ENCODE measurements at regions of chr19 and their contacts with region 1.

Region 1: GRCh38 chr19:32971715-32972540 is at the starts of genes CEP89 and FAAP24:
- DNase-seq: peak; percentile 99
- H3K4me3 Mint-ChIP-seq: peak within 1 kb of the TSS; percentile 99
- H3K27ac Mint-ChIP-seq: peak within 1 kb of the TSS; percentile 84
- H3K4me1 Mint-ChIP-seq: peaks cover 17% of the 10 kb centered on the region
- H3K27me3 Mint-ChIP-seq: no peaks in the 10 kb centered on the region
- total RNA-seq, gene CEP89: 15.6 to 21.0 TPM
- total RNA-seq, gene FAAP24: 8.1 to 8.3 TPM

Region 2: GRCh38 chr19:32674959-32675719 is 296.8 kb before region 1 on chr19 and contains the start of gene ANKRD27:
- CTCF ChIA-PET with region 1: interaction called, 3 read pairs
- POLR2A ChIA-PET with region 1: no interaction called
- intact Hi-C with region 1: loop called (anchors 5 kb)
- DNase-seq: peak; percentile 98
- H3K4me3 Mint-ChIP-seq: peak within 1 kb of the TSS; percentile 92
- H3K27ac Mint-ChIP-seq: peak within 1 kb of the TSS; percentile 67
- H3K4me1 Mint-ChIP-seq: peaks cover 28% of the 10 kb centered on the region
- H3K27me3 Mint-ChIP-seq: peaks cover 11% of the 10 kb centered on the region
- total RNA-seq, gene ANKRD27: 39.7 to 45.4 TPM

Region 3: DNA sequence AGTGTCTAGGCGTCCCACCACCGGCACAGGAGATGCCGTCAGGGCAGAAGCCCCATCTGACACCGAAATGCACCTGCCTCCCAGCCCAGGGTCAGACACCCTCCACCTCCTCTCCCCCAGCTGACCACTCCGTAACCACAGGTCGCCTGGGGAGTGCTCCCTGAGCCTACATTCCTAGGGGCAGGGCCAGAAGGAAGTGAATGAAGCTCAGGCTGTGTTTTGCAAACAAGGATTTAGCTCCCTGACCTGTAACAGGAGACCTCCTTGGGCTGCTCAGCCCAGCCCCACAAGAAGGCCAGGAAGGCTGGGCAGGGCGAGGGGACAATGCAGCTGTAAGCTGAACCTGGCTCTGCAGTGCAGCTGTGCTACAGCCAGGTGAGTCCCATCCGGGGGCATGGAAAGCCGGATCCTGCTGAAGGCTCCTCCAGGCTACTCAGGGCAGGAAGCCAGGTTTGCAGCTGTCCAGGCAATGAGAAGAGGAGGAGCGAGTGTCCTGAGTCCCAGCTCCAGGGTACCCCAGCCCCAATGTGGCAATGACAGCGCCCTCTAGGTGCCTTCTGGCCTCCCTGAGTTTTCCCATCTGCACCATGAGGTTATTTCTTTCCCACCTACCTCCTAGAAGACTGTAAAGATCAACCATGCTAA is 50.7 kb after region 1 on chr19:
- CTCF ChIA-PET with region 1: no interaction called
- POLR2A ChIA-PET with region 1: no interaction called
- intact Hi-C with region 1: no loop called
- DNase-seq: no peak
- H3K4me3 Mint-ChIP-seq: no peak overlapping the region
- H3K27ac Mint-ChIP-seq: no peak overlapping the region
- H3K4me1 Mint-ChIP-seq: no peaks in the 10 kb centered on the region
- H3K27me3 Mint-ChIP-seq: peaks cover 3% of the 10 kb centered on the region

Region 4: DNA sequence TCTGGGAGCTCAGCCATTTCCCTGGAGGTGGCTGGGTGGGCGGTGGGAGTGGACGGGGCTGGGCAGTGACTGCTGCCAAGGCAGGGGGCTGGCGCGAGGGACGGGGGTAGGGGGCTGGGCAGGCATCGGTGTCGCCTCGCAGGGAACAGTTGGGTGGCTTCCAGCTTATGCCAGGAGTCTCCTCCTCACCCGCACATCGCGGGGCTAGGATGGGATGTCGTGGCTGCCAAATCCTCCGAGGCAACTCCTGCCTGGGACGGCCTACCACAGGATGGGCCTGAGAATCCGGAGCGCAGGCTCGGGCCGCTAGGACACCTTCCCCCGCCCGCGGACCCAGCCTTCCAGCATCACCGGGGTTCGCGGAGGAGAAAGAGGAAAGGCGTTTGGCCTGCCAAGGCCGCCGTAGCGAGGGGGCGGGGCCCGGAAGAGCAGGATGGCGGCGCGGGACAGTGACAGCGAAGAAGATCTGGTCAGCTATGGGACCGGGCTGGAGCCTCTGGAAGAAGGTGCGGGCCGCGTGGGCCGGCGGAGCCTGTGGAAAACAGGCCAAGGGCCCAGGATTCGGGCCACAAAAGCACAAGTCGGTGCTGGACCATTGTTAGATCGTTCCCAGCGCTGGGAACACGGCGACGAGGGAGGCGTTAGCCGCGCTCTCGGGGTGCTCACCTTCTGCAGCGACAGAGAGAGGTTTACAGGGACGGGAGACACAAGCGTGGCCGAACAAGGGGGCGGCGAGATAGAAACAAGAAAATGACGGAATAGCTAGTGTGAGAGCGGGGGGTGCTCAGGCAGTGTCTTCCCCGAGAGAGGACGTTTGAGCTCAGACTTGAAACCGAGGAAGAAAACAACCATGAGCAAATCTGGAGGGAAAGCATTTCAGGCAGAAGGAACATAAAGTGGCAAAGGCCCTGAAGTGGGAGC is 109.1 kb after region 1 on chr19 and contains the start of gene GPATCH1:
- CTCF ChIA-PET with region 1: interaction called, 8 read pairs
- POLR2A ChIA-PET with region 1: interaction called, 3 read pairs
- intact Hi-C with region 1: loop called (anchors 2 kb)
- DNase-seq: peak; percentile 93
- H3K4me3 Mint-ChIP-seq: peak within 1 kb of the TSS; percentile 94
- H3K27ac Mint-ChIP-seq: peak within 1 kb of the TSS; percentile 83
- H3K4me1 Mint-ChIP-seq: peaks cover 23% of the 10 kb centered on the region
- H3K27me3 Mint-ChIP-seq: no peaks in the 10 kb centered on the region
- total RNA-seq, gene GPATCH1: 8.9 to 9.9 TPM

Region 5: GRCh38 chr19:33125929-33126388 is 154.0 kb after region 1 on chr19:
- CTCF ChIA-PET with region 1: interaction called, 13 read pairs
- POLR2A ChIA-PET with region 1: no interaction called
- intact Hi-C with region 1: no loop called
- DNase-seq: peak; percentile 65
- H3K4me3 Mint-ChIP-seq: no peak overlapping the region
- H3K27ac Mint-ChIP-seq: no peak overlapping the region
- H3K4me1 Mint-ChIP-seq: no peaks in the 10 kb centered on the region
- H3K27me3 Mint-ChIP-seq: no peaks in the 10 kb centered on the region

Region 6: GRCh38 chr19:33521480-33522370 is 549.8 kb after region 1 on chr19 and contains the start of gene PEPD:
- CTCF ChIA-PET with region 1: no interaction called
- POLR2A ChIA-PET with region 1: no interaction called
- intact Hi-C with region 1: loop called (anchors 5 kb)
- DNase-seq: peak; percentile 93
- H3K4me3 Mint-ChIP-seq: peak within 1 kb of the TSS; percentile 81
- H3K27ac Mint-ChIP-seq: no peak within 1 kb of the TSS
- H3K4me1 Mint-ChIP-seq: peaks cover 19% of the 10 kb centered on the region
- H3K27me3 Mint-ChIP-seq: no peaks in the 10 kb centered on the region
- total RNA-seq, gene PEPD: 29.3 to 30.6 TPM